ENCODE measurements at regions of chr5 and their contacts with region 1.

Region 1: DNA sequence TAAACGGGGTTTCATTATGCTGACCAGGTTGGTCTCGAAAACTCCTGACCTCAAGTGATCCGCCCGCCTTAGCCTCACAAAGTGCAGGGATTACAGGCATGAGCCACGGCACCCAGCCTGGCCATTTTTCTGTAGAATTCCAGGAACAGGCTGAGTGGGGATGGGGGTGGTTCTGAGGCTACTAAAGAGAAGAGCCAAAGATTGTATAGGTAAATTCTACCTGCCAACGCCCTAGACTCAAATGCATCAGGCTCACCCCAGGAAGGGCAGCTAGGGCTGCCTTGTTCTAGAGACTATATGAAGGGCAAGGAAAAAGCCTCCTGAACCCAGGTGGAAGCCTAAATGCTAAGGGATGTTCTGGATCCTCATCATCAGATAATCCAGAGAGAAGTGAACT is 1.6 kb upstream of the C5orf52 start:
- DNase-seq: no peak
- ATAC-seq: no peak
- H3K4me3 ChIP-seq: no peak overlapping the region
- H3K27ac ChIP-seq: no peak overlapping the region
- H3K4me1 ChIP-seq: peaks cover 0 to 9% of the 10 kb centered on the region in 2 experiments; a peak in 2 of 4 replicates
- H3K27me3 ChIP-seq: no peaks in the 10 kb centered on the region
- CTCF ChIP-seq: no peak
- POLR2A ChIP-seq: no peak
- RAD21 ChIP-seq: no peak

Region 2: DNA sequence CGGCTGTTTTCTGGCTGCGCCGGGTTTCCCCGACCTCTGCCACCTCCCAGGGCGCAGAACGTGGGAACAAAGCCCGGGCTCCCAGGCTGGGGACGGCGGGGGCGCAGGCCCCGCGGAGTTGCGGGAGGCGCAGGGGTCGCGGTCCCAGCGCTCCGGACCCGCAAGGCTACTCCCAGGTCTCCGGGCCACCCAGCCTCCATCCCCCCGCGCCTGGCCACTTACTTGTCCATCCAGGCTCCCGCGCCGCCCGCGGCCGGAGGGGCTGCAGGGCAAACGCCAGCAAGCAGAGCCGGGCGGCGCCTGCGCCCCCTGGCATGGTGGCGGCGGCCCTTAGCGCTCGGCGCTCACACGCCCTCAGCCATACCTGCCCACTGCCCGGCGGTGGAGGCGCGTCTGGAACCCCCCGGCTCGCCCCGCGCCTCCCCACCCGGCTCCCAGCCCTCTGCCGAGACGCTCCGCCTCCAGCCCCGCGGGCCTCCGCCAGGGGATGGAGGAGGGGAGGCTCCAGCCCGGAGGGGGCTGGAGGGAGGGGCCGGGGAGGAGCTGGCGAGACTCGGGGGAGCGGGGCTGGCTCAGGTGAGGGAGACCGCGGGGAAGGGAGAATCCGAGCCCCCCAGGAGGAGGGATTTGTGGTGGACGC is 94.2 kb before region 1 on chr5 and contains the start of gene ADAM19:
- CTCF ChIA-PET with region 1: no interaction called
- POLR2A ChIA-PET with region 1: no interaction called
- RAD21 ChIA-PET with region 1: no interaction called
- intact Hi-C with region 1: loop called (anchors 2 kb)
- DNase-seq: no peak
- ATAC-seq: peak; percentile 89
- H3K4me3 ChIP-seq: peak within 1 kb of the TSS; percentile 82 to 96
- H3K27ac ChIP-seq: peak within 1 kb of the TSS; percentile 75; the same call in 1 of the 2 replicates
- H3K4me1 ChIP-seq: peaks cover 17 to 72% of the 10 kb centered on the region in 2 experiments
- H3K27me3 ChIP-seq: no peaks in the 10 kb centered on the region
- CTCF ChIP-seq: no peak
- POLR2A ChIP-seq: no peak
- RAD21 ChIP-seq: no peak
- total RNA-seq, gene ADAM19: 77.3 TPM